ENCODE measurements at regions of chr22 and their contacts with region 1.

Region 1: DNA sequence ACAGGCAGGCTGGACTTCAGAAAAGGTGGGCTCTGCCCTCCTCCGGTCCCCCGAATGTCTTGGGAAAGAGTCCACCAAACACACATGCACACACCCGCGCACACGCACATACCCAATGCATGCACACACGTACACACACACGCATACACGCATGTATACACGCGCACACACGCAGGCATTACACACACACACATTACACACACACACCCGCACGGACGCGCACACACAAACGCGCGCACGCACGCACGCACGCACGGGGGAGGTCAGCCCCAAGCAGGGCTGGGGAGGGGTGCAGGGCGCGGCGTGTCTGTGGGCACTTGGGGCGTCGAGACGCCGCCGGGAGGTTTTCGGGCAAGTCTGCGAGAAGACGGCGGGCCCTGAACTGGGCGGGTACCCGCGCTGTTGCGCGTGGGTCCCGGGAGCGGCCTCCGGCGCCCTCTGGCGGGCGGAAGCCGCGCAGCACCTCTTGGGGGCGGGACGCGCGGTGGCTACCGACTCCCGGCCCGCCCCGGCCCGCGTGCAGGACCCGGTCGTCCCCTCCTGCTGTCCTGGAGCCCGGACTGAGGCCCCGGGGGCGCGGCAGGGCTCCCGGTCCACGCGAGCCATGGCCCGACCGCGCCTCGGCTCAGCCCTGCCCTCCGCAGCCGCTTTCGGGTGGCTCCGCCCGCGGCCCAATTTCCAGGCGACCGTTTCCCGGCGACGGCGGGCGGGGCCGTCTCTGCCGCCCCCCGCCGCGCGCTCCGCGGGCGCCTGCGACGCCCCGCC is 3.6 kb downstream of the SEPTIN5 start:
- DNase-seq: peak in 1 of 2 donors; percentile 87
- H3K4me3 ChIP-seq: peak overlapping the region; percentile 85 to 87
- H3K27ac ChIP-seq: peak overlapping the region; percentile 78 to 80
- H3K4me1 ChIP-seq: peaks cover 13 to 31% of the 10 kb centered on the region in 2 donors
- H3K27me3 ChIP-seq: no peaks in the 10 kb centered on the region
- CTCF ChIP-seq: peak; percentile 89 to 97 (median 91)

Region 2: GRCh38 chr22:19143967-19144400 is 573.9 kb before region 1 on chr22:
- intact Hi-C with region 1: loop called (anchors 10 kb)
- DNase-seq: no peak
- H3K4me3 ChIP-seq: peak overlapping the region; percentile 78 to 80
- H3K27ac ChIP-seq: peak overlapping the region; percentile 63 to 72
- H3K4me1 ChIP-seq: peaks cover 0 to 9% of the 10 kb centered on the region in 2 donors
- H3K27me3 ChIP-seq: peaks cover 5% of the 10 kb centered on the region
- CTCF ChIP-seq: no peak

Region 3: DNA sequence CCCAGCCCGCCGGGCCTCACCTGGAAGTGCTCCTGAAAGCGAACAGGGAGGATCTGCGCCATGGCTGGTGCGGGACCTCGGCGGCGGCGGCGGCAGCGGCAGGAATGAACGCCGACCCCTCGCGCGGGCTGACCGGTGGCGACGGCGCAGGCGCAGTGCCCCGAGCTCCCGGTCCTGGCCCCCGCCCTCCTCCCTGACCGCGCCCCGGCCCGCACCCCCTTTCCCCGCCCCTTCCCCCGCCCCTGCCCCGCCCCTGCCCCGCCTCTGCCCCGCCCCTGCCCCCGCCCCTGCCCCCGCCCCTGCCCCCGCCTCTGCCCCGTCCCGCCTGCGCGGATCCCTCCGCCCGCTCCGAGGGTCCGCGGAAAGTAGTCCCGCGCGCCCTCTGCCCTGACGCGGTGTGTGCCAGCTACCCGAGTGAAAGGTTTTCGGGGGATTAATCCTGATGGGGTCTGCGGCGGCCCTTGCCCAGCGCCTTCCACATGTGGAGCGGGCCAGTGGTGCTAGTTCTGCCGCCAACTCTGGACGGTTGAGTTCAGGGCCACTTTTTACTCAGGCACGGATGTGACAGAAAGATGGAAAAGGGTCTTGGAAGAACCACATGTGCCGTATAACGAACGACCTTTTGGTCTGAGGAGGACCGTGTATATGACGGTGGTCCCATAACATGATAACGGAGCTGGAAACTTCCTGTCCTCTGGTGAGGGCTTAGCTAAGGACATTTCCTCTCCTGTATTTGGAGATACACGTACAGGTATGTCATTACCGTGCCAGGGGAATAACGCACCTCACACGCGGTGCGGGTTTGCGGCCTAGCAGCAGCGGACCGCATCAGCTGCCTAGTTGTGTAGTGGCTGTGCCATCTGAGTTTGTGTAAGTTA is 426.1 kb before region 1 on chr22 and contains the start of gene CLTCL1:
- intact Hi-C with region 1: loop called (anchors 10 kb)
- DNase-seq: peak in 1 of 2 donors; percentile 82
- H3K4me3 ChIP-seq: peak within 1 kb of the TSS; percentile 87 to 94
- H3K27ac ChIP-seq: peak within 1 kb of the TSS; percentile 47 to 69
- H3K4me1 ChIP-seq: peaks cover 4 to 5% of the 10 kb centered on the region in 2 donors
- H3K27me3 ChIP-seq: no peaks in the 10 kb centered on the region
- CTCF ChIP-seq: no peak
- total RNA-seq, gene CLTCL1: 26.0 TPM

Region 4: GRCh38 chr22:19479357-19480172 is 238.3 kb before region 1 on chr22 and contains the start of gene CDC45:
- intact Hi-C with region 1: loop called (anchors 2 kb)
- DNase-seq: peak; percentile 90 to 98
- H3K4me3 ChIP-seq: peak within 1 kb of the TSS; percentile 84 to 85
- H3K27ac ChIP-seq: peak within 1 kb of the TSS; percentile 87 to 98
- H3K4me1 ChIP-seq: peaks cover 3 to 11% of the 10 kb centered on the region in 2 donors
- H3K27me3 ChIP-seq: no peaks in the 10 kb centered on the region
- CTCF ChIP-seq: no peak
- total RNA-seq, gene CDC45: not detected

Region 5: GRCh38 chr22:19679522-19680101 is 38.3 kb before region 1 on chr22:
- intact Hi-C with region 1: loop called (anchors 1 kb)
- DNase-seq: peak in 1 of 2 donors; percentile 61
- H3K4me3 ChIP-seq: no peak overlapping the region
- H3K27ac ChIP-seq: no peak overlapping the region
- H3K4me1 ChIP-seq: no peaks in the 10 kb centered on the region
- H3K27me3 ChIP-seq: no peaks in the 10 kb centered on the region
- CTCF ChIP-seq: peak; percentile 52 to 73 (median 70)

Region 6: DNA sequence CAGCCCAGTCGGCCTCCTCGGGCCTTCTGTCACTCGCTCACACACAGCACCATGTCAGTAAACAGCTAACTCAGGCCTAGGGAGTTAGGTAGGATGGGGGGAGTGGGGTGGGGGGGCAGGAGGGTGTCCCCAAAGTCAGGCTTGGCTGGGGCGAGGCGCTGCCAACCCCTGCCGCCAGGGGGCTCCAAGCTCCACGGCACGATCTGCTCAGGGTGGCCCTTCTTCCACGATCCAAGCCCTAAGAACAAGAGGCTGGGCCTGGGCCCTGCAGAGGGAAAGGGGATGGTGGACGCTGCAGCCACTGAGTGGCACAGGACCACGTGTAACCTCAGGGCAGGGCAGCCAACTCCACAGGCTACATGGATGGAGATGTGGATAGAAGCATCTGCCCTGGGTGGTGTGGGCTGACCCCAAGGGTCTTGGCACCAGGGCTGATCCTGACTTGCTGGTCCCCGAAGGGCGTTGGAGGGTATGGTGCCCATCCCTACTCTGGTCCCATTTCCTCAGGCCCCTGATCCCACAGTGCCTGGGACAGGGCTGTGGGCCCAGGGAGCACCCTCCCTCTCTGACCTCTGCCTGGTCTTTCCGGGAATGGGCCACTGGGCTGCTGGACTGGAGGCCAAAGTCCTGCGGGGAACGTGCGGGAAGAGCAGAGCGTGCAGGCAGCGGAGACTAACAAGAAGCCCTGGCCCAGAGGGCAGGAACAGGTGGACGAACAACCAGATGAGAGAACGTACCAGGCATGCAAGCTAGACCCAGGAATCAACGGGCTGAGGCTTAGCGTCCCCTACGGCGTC is 252.8 kb after region 1 on chr22:
- intact Hi-C with region 1: no loop called
- DNase-seq: peak in 1 of 2 donors; percentile 82
- H3K4me3 ChIP-seq: no peak overlapping the region
- H3K27ac ChIP-seq: peak overlapping the region; percentile 26 to 69
- H3K4me1 ChIP-seq: peaks cover 0 to 10% of the 10 kb centered on the region in 2 donors
- H3K27me3 ChIP-seq: no peaks in the 10 kb centered on the region
- CTCF ChIP-seq: peak; percentile 75 to 98 (median 96)

Region 7: GRCh38 chr22:20116951-20117645 is 399.2 kb after region 1 on chr22 and contains the start of gene TRMT2A:
- intact Hi-C with region 1: loop called (anchors 10 kb)
- DNase-seq: peak; percentile 92 to 99
- H3K4me3 ChIP-seq: peak within 1 kb of the TSS; percentile 68 to 85
- H3K27ac ChIP-seq: peak within 1 kb of the TSS; percentile 83 to 85
- H3K4me1 ChIP-seq: peaks cover 6 to 18% of the 10 kb centered on the region in 2 donors
- H3K27me3 ChIP-seq: no peaks in the 10 kb centered on the region
- CTCF ChIP-seq: peak in 2 of 3 experiments; percentile 17 to 26
- total RNA-seq, gene TRMT2A: 161 TPM

Measured in ascending aorta (tissue), 2 donors.